Mammary epithelial cell (primary cell): ENCODE measurements at regions of chr4 and their contacts with region 1.

Region 1: DNA sequence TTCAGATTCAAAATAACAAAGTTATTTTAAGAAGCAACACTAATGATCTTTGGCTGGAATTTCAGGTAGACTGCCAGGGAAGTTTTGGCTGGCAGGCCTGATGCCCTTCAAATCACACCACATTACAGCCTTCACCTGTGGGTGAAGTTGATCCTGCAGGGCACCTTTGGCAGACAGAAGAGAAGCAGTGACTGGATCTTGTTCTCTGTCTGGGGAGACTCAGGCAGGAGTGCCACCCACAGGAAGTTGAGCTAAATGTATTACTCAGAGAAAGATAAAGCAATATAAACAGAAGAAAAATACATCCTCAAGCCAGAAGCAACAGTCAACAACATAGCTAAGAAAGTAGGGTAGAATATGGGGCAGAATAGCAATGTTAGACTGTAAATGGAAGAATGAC is 12.8 kb upstream of the CFAP299 start:
- DNase-seq: peak; percentile 62
- H3K4me3 ChIP-seq: no peak overlapping the region
- H3K27ac ChIP-seq: no peak overlapping the region
- H3K4me1 ChIP-seq: no peaks in the 10 kb centered on the region
- H3K27me3 ChIP-seq: no peaks in the 10 kb centered on the region
- CTCF ChIP-seq: peak; percentile 54 to 63

Region 2: GRCh38 chr4:80221161-80221560 is 101.6 kb before region 1 on chr4:
- CTCF ChIA-PET with region 1: interaction called, 9 read pairs
- dilution Hi-C with region 1: loop called (anchors 25 kb)
- in situ Hi-C with region 1: loop called (anchors 5 kb)
- intact Hi-C with region 1: loop called (anchors 1 kb)
- DNase-seq: no peak
- H3K4me3 ChIP-seq: no peak overlapping the region
- H3K27ac ChIP-seq: no peak overlapping the region
- H3K4me1 ChIP-seq: no peaks in the 10 kb centered on the region
- H3K27me3 ChIP-seq: no peaks in the 10 kb centered on the region
- CTCF ChIP-seq: peak; percentile 32 to 38

Region 3: GRCh38 chr4:80266253-80266901 is 56.3 kb before region 1 on chr4 and contains the start of gene FGF5:
- CTCF ChIA-PET with region 1: no interaction called
- dilution Hi-C with region 1: no loop called
- in situ Hi-C with region 1: no loop called
- intact Hi-C with region 1: loop called (anchors 1 kb)
- DNase-seq: peak; percentile 90
- H3K4me3 ChIP-seq: peak within 1 kb of the TSS; percentile 63 to 79 (median 63)
- H3K27ac ChIP-seq: peak within 1 kb of the TSS; percentile 59
- H3K4me1 ChIP-seq: peaks cover 34% of the 10 kb centered on the region
- H3K27me3 ChIP-seq: no peaks in the 10 kb centered on the region
- CTCF ChIP-seq: no peak
- total RNA-seq, gene FGF5: 0.17 to 2.9 TPM